CD4-positive, alpha-beta T cell (primary cell): ENCODE measurements at regions of chr4 and their contacts with region 1.

Region 1: DNA sequence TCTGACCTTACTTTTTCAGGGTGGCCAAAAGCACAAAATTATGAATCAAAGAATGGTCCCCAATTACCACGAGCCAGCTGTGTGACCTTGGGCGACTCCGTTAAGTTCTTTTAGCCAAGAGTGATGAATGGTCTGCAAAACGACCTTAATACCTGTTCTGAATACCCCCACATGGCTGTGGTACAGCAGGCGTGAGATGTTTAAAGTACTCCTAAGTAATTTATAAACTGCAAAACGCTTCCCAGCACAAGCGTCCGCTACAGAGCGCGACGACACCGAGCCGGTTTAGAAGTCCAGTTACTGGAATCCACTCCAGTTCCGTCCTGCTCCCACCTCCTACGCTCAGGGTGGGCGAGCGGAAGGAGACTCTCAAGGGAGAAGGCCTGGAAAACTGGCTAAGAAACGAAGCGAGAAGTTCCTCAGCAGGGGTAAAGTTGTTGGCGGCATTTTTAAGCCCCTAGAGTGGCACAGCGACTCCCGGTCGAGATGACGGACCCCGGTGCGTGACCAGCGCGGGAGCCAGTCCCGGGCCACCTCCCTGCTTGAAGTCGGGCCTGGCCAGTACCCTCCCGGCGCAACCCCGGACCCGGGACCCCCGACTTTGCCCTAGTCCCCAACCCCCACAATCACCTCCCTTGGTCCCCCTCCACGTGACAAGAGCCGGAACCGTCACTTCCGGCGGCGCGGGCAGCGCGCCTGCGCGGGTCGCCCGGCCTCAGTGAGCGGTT is 683 bp upstream of the BMP2K start:
- DNase-seq: peak; percentile 74 to 93 (median 85)
- ATAC-seq: peak; percentile 61
- H3K4me3 ChIP-seq: peak overlapping the region; percentile 94
- H3K4me3 Mint-ChIP-seq: peak overlapping the region; percentile 96
- H3K27ac ChIP-seq: peak overlapping the region; percentile 72 to 87
- H3K27ac Mint-ChIP-seq: peak overlapping the region; percentile 90
- H3K4me1 ChIP-seq: peaks cover 15% of the 10 kb centered on the region
- H3K4me1 Mint-ChIP-seq: peaks cover 20% of the 10 kb centered on the region
- H3K27me3 ChIP-seq: no peaks in the 10 kb centered on the region
- H3K27me3 Mint-ChIP-seq: no peaks in the 10 kb centered on the region
- CTCF ChIP-seq: no peak

Region 2: GRCh38 chr4:78644744-78645330 is 130.6 kb before region 1 on chr4:
- CTCF ChIA-PET with region 1: interaction called, 3 read pairs
- POLR2A ChIA-PET with region 1: interaction called, 5 read pairs
- intact Hi-C with region 1: loop called in 1 of 2 experiments (anchors 5 kb)
- DNase-seq: peak; percentile 12 to 74 (median 34)
- ATAC-seq: peak; percentile 99
- H3K4me3 ChIP-seq: no peak overlapping the region
- H3K4me3 Mint-ChIP-seq: no peak overlapping the region
- H3K27ac ChIP-seq: no peak overlapping the region
- H3K27ac Mint-ChIP-seq: no peak overlapping the region
- H3K4me1 ChIP-seq: no peaks in the 10 kb centered on the region
- H3K4me1 Mint-ChIP-seq: peaks cover 5% of the 10 kb centered on the region
- H3K27me3 ChIP-seq: no peaks in the 10 kb centered on the region
- H3K27me3 Mint-ChIP-seq: no peaks in the 10 kb centered on the region
- CTCF ChIP-seq: peak; percentile 80

Region 3: GRCh38 chr4:78720994-78721677 is 54.3 kb before region 1 on chr4:
- CTCF ChIA-PET with region 1: no interaction called
- POLR2A ChIA-PET with region 1: no interaction called
- intact Hi-C with region 1: loop called in 1 of 2 experiments (anchors 10 kb)
- DNase-seq: peak in 8 of 14 experiments; percentile 0 to 37 (median 14)
- ATAC-seq: peak; percentile 68
- H3K4me3 ChIP-seq: no peak overlapping the region
- H3K4me3 Mint-ChIP-seq: peak overlapping the region; percentile 56
- H3K27ac ChIP-seq: no peak overlapping the region
- H3K27ac Mint-ChIP-seq: no peak overlapping the region
- H3K4me1 ChIP-seq: peaks cover 8% of the 10 kb centered on the region
- H3K4me1 Mint-ChIP-seq: peaks cover 24% of the 10 kb centered on the region
- H3K27me3 ChIP-seq: no peaks in the 10 kb centered on the region
- H3K27me3 Mint-ChIP-seq: no peaks in the 10 kb centered on the region
- CTCF ChIP-seq: no peak

Region 4: GRCh38 chr4:78818530-78819079 is 43.1 kb after region 1 on chr4:
- CTCF ChIA-PET with region 1: no interaction called
- POLR2A ChIA-PET with region 1: no interaction called
- intact Hi-C with region 1: loop called in 1 of 2 experiments (anchors 5 kb)
- DNase-seq: no peak
- ATAC-seq: no peak
- H3K4me3 ChIP-seq: no peak overlapping the region
- H3K4me3 Mint-ChIP-seq: no peak overlapping the region
- H3K27ac ChIP-seq: no peak overlapping the region
- H3K27ac Mint-ChIP-seq: no peak overlapping the region
- H3K4me1 ChIP-seq: no peaks in the 10 kb centered on the region
- H3K4me1 Mint-ChIP-seq: peaks cover 37% of the 10 kb centered on the region
- H3K27me3 ChIP-seq: no peaks in the 10 kb centered on the region
- H3K27me3 Mint-ChIP-seq: no peaks in the 10 kb centered on the region
- CTCF ChIP-seq: no peak

Region 5: GRCh38 chr4:78938868-78939666 is 163.6 kb after region 1 on chr4 and contains the start of gene PAQR3:
- CTCF ChIA-PET with region 1: no interaction called
- POLR2A ChIA-PET with region 1: no interaction called
- intact Hi-C with region 1: loop called (anchors 5 kb)
- DNase-seq: peak; percentile 73 to 94 (median 82)
- ATAC-seq: peak; percentile 96
- H3K4me3 ChIP-seq: peak within 1 kb of the TSS; percentile 87
- H3K4me3 Mint-ChIP-seq: peak within 1 kb of the TSS; percentile 93
- H3K27ac ChIP-seq: no peak within 1 kb of the TSS
- H3K27ac Mint-ChIP-seq: peak within 1 kb of the TSS; percentile 82
- H3K4me1 ChIP-seq: peaks cover 24% of the 10 kb centered on the region
- H3K4me1 Mint-ChIP-seq: peaks cover 44% of the 10 kb centered on the region
- H3K27me3 ChIP-seq: no peaks in the 10 kb centered on the region
- H3K27me3 Mint-ChIP-seq: peaks cover 13% of the 10 kb centered on the region
- CTCF ChIP-seq: no peak
- total RNA-seq, gene PAQR3: 29.5 to 30.7 TPM

Region 6: GRCh38 chr4:80097400-80098177 is 1322.1 kb after region 1 on chr4:
- CTCF ChIA-PET with region 1: no interaction called
- POLR2A ChIA-PET with region 1: no interaction called
- intact Hi-C with region 1: no loop called
- DNase-seq: no peak
- ATAC-seq: no peak
- H3K4me3 ChIP-seq: no peak overlapping the region
- H3K4me3 Mint-ChIP-seq: no peak overlapping the region
- H3K27ac ChIP-seq: no peak overlapping the region
- H3K27ac Mint-ChIP-seq: no peak overlapping the region
- H3K4me1 ChIP-seq: no peaks in the 10 kb centered on the region
- H3K4me1 Mint-ChIP-seq: no peaks in the 10 kb centered on the region
- H3K27me3 ChIP-seq: no peaks in the 10 kb centered on the region
- H3K27me3 Mint-ChIP-seq: peaks cover 5% of the 10 kb centered on the region
- CTCF ChIP-seq: no peak